ENCODE measurements at regions of chr20 and their contacts with region 1.

Region 1: DNA sequence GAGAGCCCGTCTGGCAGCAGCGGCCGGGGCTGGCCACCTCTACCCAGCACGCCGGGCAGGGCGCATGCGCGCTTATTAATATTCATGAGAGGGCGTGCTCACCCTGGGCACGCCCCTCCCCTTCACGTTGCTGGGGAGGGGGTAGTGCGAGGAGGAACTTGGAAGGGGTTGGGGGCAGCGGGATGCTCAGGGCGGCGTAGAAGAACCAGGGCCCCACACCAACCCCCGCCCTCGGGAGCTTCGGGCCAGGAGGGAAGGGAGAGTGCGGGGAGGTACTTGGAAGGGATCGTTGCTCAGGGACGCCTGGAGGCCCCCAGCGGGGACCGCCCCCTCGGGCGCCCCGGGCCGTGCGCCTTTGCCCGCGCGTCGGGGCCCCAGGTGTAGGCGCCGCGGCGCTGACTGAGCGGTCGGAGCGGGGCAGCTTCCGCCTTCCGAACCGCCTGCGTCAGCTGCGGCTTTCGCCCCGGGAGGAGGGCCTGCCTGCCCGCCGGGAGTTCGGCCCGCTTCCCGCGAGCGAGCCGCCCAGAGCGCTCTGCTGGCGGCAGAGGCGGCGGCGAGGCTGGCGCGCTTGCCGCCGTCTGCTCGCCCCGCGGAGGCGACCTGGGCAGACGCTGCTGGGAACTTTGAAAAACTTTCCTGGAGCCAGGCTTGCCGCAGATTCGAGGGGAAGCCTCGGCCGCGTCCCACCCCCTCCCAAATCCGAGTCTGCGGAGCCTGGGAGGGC is at the start of gene JAG1:
- DNase-seq: peak; percentile 85
- ATAC-seq: peak; percentile 78
- H3K4me3 ChIP-seq: peak within 1 kb of the TSS; percentile 75 to 90
- H3K27ac ChIP-seq: peak within 1 kb of the TSS; percentile 99
- H3K4me1 ChIP-seq: peaks cover 13 to 26% of the 10 kb centered on the region in 2 experiments
- H3K27me3 ChIP-seq: no peaks in the 10 kb centered on the region
- CTCF ChIP-seq: no peak
- POLR2A ChIP-seq: peak; percentile 9
- RAD21 ChIP-seq: no peak
- total RNA-seq, gene JAG1: 31.9 TPM

Region 2: DNA sequence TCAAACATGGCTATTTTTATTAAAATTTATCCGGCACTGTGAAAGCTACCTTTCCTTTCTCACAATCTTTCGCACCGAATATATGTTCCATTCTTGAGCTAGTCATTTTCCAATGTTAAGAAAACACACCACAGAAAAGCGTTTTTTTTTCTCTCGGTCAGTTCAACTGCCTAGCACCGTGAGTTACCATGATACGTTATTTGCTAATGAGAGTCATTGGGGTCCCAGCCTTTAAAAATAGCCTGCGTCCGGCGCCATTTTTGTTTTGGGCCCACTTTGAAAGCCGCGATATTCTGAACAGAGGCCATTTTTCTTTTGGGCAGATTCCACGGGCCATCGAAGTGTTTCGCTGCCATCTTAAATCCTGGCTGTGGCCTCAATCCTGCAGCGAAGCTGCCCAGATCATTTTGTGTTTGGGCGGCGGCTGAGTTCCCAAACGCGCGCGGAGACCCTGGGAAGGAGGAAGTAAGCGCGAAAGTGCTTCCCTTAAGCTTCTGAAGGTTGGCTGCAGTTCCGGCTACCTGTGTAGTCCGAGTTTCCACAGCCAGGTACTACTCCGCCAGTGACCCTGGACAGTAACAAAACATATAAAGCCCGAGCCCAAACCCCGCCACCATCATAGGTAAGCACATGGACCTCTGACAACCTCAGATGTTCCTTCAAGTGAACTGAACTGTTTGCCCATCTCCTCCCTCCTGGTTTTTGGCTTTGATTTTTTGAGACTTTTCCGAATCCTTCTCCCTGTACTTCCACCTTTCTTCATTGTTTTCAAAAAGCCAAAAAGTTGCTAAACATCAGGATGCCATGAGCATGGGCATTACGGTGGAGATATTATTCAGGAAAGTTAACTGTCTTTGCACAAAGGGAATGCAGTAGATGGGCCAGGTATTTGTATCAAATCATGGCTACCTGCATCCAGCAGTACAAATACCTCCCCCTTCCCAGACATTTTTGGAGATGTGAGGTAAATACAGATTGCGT is 239.0 kb before region 1 on chr20 and contains the start of gene SLX4IP:
- CTCF ChIA-PET with region 1: no interaction called
- POLR2A ChIA-PET with region 1: interaction called, 4 read pairs
- RAD21 ChIA-PET with region 1: no interaction called
- intact Hi-C with region 1: loop called (anchors 10 kb)
- DNase-seq: peak; percentile 97
- ATAC-seq: peak; percentile 75
- H3K4me3 ChIP-seq: peak within 1 kb of the TSS; percentile 63 to 96
- H3K27ac ChIP-seq: peak within 1 kb of the TSS; percentile 86
- H3K4me1 ChIP-seq: peaks cover 5 to 28% of the 10 kb centered on the region in 2 experiments
- H3K27me3 ChIP-seq: no peaks in the 10 kb centered on the region
- CTCF ChIP-seq: no peak
- POLR2A ChIP-seq: peak; percentile 78
- RAD21 ChIP-seq: 0 out of 2 replicates have a peak, but pooled peaks have one; percentile 5
- total RNA-seq, gene SLX4IP: 11.1 TPM

Region 3: DNA sequence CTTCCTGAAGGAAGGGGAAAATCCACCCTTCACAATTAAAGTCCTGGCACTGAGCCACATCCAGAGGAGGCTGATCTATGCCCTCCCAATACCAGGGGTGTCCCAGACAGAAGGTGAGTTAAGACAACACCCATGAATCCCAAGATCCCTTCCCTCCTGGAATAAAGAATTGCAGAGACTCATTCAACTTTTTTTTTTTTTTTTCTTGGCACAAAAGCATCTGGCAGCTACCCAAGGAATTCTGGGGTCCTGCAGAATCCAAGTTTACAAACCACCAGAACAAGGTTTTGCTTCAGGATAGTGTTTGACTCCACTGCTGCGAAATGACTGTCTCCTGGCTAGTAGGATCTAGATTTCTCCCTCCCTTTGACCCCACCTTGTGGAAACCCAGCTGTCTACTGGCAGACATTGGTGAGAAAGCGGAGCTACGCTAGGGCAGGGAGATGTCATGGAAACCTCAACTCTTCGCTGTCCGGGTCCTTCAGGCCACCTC is 37.8 kb before region 1 on chr20:
- CTCF ChIA-PET with region 1: no interaction called
- POLR2A ChIA-PET with region 1: no interaction called
- RAD21 ChIA-PET with region 1: no interaction called
- intact Hi-C with region 1: no loop called
- DNase-seq: no peak
- ATAC-seq: no peak
- H3K4me3 ChIP-seq: no peak overlapping the region
- H3K27ac ChIP-seq: no peak overlapping the region
- H3K4me1 ChIP-seq: no peaks in the 10 kb centered on the region
- H3K27me3 ChIP-seq: no peaks in the 10 kb centered on the region
- CTCF ChIP-seq: no peak
- POLR2A ChIP-seq: no peak
- RAD21 ChIP-seq: no peak

Region 4: GRCh38 chr20:10823585-10823984 is 149.4 kb after region 1 on chr20:
- CTCF ChIA-PET with region 1: no interaction called
- POLR2A ChIA-PET with region 1: no interaction called
- RAD21 ChIA-PET with region 1: no interaction called
- intact Hi-C with region 1: no loop called
- DNase-seq: no peak
- ATAC-seq: peak; percentile 57; the same call in 1 of the 2 replicates
- H3K4me3 ChIP-seq: no peak overlapping the region
- H3K27ac ChIP-seq: no peak overlapping the region
- H3K4me1 ChIP-seq: no peaks in the 10 kb centered on the region
- H3K27me3 ChIP-seq: no peaks in the 10 kb centered on the region
- CTCF ChIP-seq: peak in 1 of 3 experiments; percentile 28; a peak in 1 of 6 replicates
- POLR2A ChIP-seq: no peak
- RAD21 ChIP-seq: 0 out of 2 replicates have a peak, but pooled peaks have one; percentile 8

Region 5: DNA sequence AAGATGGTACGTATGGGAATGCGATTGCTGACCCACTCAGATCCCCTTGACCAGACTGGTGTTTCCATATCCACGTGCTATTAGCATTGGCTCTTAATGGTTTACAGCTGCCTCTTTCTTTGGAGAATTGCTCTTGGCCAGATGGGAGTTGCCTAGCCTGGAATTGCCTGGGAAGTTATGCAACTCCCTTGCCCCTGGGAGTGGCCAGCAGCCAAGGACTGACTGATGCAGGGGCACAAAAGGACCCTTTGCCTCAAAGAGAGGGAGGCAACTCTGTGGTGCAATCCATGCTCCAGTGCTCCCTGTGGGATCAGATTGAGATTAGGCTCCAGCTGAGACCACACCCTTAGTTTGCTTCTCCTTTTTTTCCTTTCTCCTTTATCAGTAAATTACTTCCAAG is 203.2 kb after region 1 on chr20:
- CTCF ChIA-PET with region 1: no interaction called
- POLR2A ChIA-PET with region 1: no interaction called
- RAD21 ChIA-PET with region 1: no interaction called
- intact Hi-C with region 1: no loop called
- DNase-seq: no peak
- ATAC-seq: no peak
- H3K4me3 ChIP-seq: no peak overlapping the region
- H3K27ac ChIP-seq: no peak overlapping the region
- H3K4me1 ChIP-seq: no peaks in the 10 kb centered on the region
- H3K27me3 ChIP-seq: no peaks in the 10 kb centered on the region
- CTCF ChIP-seq: no peak
- POLR2A ChIP-seq: no peak
- RAD21 ChIP-seq: no peak

Region 6: DNA sequence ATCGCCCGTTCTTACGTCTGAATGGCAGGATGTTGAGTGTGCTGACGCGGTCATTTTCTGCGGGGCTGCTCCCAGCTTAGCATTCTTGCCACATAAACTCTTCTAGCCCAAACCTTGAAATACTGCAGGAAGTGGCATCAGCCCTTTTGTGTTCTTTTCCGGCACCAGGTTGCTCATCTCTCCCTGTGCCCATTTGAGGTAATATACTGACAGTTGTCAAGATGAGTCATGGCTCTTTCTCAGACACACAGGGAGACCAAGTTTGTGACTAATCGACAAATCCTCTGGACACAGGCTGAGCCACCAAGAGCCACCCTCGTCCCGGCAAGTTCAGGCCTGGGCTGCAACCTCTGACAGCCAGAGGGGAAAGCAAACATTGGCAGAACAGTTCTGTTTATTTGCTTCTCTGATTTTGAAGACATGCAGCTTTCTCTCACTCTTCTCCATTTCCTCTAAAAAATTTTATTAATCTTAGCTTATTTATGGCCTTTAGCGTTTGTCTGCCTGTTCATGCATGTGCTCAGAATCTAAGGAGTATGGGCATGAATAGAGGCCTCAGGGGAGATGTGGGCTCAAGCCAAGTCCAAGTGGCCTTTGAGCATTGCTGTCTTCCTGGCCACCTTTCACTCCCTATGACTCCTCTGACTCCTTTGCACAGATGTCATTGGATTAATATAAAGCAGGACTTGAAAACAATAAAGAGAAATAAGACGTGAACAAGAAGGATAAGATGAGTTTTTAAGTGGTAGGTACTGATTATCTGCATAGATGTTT is 327.8 kb after region 1 on chr20:
- CTCF ChIA-PET with region 1: no interaction called
- POLR2A ChIA-PET with region 1: no interaction called
- RAD21 ChIA-PET with region 1: no interaction called
- intact Hi-C with region 1: loop called (anchors 2 kb)
- DNase-seq: peak; percentile 95
- ATAC-seq: peak; percentile 97
- H3K4me3 ChIP-seq: peak overlapping the region; percentile 12 to 32
- H3K27ac ChIP-seq: peak overlapping the region; percentile 49
- H3K4me1 ChIP-seq: peaks cover 13 to 24% of the 10 kb centered on the region in 2 experiments
- H3K27me3 ChIP-seq: no peaks in the 10 kb centered on the region
- CTCF ChIP-seq: no peak
- POLR2A ChIP-seq: no peak
- RAD21 ChIP-seq: peak; percentile 33; the same call in 1 of the 2 replicates

Region 7: GRCh38 chr20:11204926-11205768 is 531.0 kb after region 1 on chr20:
- CTCF ChIA-PET with region 1: interaction called, 9 read pairs
- POLR2A ChIA-PET with region 1: interaction called, 3 read pairs
- RAD21 ChIA-PET with region 1: no interaction called
- intact Hi-C with region 1: loop called (anchors 2 kb)
- DNase-seq: peak; percentile 73
- ATAC-seq: peak; percentile 76
- H3K4me3 ChIP-seq: no peak overlapping the region
- H3K27ac ChIP-seq: no peak overlapping the region
- H3K4me1 ChIP-seq: peaks cover 22 to 29% of the 10 kb centered on the region in 2 experiments
- H3K27me3 ChIP-seq: no peaks in the 10 kb centered on the region
- CTCF ChIP-seq: peak; percentile 50 to 95 (median 91); a peak in 5 of 6 replicates
- POLR2A ChIP-seq: no peak
- RAD21 ChIP-seq: peak; percentile 74

Region 8: GRCh38 chr20:11544029-11544678 is 870.0 kb after region 1 on chr20:
- CTCF ChIA-PET with region 1: interaction called, 3 read pairs
- POLR2A ChIA-PET with region 1: no interaction called
- RAD21 ChIA-PET with region 1: interaction called in 1 of 2 experiments, 3 read pairs
- intact Hi-C with region 1: loop called (anchors 5 kb)
- DNase-seq: peak; percentile 64
- ATAC-seq: peak; percentile 81
- H3K4me3 ChIP-seq: 0 out of 4 replicates have a peak overlapping the region, but pooled peaks of 1 of the 2 experiments have one; percentile 12
- H3K27ac ChIP-seq: no peak overlapping the region
- H3K4me1 ChIP-seq: peaks cover 8 to 18% of the 10 kb centered on the region in 2 experiments
- H3K27me3 ChIP-seq: no peaks in the 10 kb centered on the region
- CTCF ChIP-seq: peak; percentile 33 to 70 (median 56); a peak in 3 of 6 replicates
- POLR2A ChIP-seq: no peak
- RAD21 ChIP-seq: peak; percentile 88

Measured in HCT116 (cell line).